Heart left ventricle (tissue), 16 donors: ENCODE measurements at regions of chr3 and their contacts with region 1.

Region 1: DNA sequence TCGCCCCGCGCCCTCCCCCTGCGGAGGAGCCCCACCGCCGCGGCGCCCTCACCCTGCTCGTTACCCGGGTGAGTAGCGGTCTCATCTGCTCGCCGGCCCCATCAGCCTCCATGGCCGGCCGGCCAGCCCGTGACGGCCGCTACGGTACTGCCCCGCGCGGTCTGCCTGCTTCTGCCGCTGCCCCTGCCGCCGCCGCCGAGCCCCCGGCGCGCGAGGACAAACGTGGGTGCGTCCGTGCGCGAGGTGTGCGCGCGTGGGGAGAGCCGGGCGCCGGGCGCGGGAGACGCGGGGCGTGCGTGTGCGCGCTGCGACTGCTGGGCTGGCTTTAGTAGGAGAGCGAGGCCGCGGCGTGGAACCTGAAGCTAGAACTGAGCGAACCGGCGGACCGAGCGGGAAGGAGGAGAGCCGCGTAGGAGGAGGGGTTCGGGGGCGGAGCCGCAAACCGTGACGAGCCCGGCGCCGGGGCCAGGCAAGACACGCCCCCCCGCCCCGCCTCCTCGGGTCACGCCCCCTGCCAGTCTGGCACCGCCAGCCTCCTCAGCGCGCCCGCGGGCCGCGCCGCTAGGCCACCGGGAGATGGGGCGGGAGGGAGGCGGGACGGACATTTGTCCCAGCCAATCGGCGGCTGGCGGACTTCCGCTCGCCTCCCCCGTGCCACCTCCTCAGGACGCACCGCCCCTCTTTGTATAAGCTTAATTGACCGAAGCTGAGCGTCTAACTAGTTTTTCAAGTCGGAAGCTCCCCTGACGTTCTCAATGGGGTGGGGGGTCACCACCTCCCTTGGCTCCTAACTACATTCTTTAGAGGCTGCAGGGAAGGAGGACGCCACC is at the start of gene SLC4A7:
- DNase-seq: peak; percentile 97 to 99 (median 97)
- ATAC-seq: peak; percentile 90 to 98 (median 97)
- H3K4me3 ChIP-seq: peak within 1 kb of the TSS; percentile 60 to 96 (median 83)
- H3K27ac ChIP-seq: peak within 1 kb of the TSS; percentile 84 to 97 (median 92)
- H3K4me1 ChIP-seq: peaks cover 0 to 38% (median 16%) of the 10 kb centered on the region in 12 donors
- H3K27me3 ChIP-seq: no peaks in the 10 kb centered on the region
- CTCF ChIP-seq: peak in 1 of 12 donors; percentile 11
- POLR2A ChIP-seq: peak; percentile 77 to 97
- total RNA-seq, gene SLC4A7: 8.9 to 25.4 (median 16.0) TPM

Region 2: GRCh38 chr3:27521179-27521871 is 37.1 kb after region 1 on chr3:
- intact Hi-C with region 1: loop called in 2 of 10 experiments (anchors 5 kb)
- DNase-seq: peak in 3 of 5 donors; percentile 19 to 49 (median 41)
- ATAC-seq: peak; percentile 69 to 96 (median 88)
- H3K4me3 ChIP-seq: no peak overlapping the region
- H3K27ac ChIP-seq: peak overlapping the region in 11 of 12 donors; percentile 6 to 63 (median 45)
- H3K4me1 ChIP-seq: peaks cover 0 to 35% (median 12%) of the 10 kb centered on the region in 12 donors
- H3K27me3 ChIP-seq: no peaks in the 10 kb centered on the region
- CTCF ChIP-seq: no peak
- POLR2A ChIP-seq: no peak

Region 3: GRCh38 chr3:27544372-27544865 is 60.2 kb after region 1 on chr3:
- intact Hi-C with region 1: no loop called
- DNase-seq: no peak
- ATAC-seq: peak in 2 of 4 donors; percentile 30 to 83
- H3K4me3 ChIP-seq: no peak overlapping the region
- H3K27ac ChIP-seq: peak overlapping the region in 6 of 12 donors; percentile 11 to 55 (median 36)
- H3K4me1 ChIP-seq: peaks cover 0 to 28% (median 0%) of the 10 kb centered on the region in 12 donors
- H3K27me3 ChIP-seq: no peaks in the 10 kb centered on the region
- CTCF ChIP-seq: no peak
- POLR2A ChIP-seq: no peak

Region 4: GRCh38 chr3:27632431-27633223 is 148.4 kb after region 1 on chr3:
- intact Hi-C with region 1: loop called in 3 of 10 experiments (anchors 5 to 10 kb)
- DNase-seq: peak; percentile 43 to 66 (median 50)
- ATAC-seq: peak in 3 of 4 donors; percentile 85 to 89 (median 86)
- H3K4me3 ChIP-seq: peak overlapping the region in 11 of 12 donors; percentile 25 to 76 (median 63)
- H3K27ac ChIP-seq: peak overlapping the region; percentile 3 to 91 (median 76)
- H3K4me1 ChIP-seq: peaks cover 0 to 10% (median 1%) of the 10 kb centered on the region in 12 donors
- H3K27me3 ChIP-seq: no peaks in the 10 kb centered on the region
- CTCF ChIP-seq: no peak
- POLR2A ChIP-seq: no peak

Region 5: DNA sequence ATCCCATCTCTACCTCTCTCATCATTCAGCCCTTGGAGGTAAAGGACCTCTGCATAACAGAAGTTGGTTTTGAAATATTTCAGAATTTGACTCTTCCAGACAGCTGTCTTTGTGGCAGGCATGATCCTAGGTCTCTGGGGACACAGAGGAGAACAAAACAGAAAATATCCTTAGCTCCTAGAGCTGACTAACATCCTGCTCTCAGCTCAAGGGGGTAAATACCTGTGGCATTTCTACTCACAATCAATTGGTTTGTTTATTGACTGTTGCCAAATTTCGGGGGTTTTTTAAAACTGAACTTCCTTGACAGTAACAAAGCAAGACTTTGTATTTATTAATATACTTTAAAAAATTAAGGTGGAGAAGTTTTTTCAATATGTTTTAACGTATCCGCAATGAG is 159.1 kb after region 1 on chr3:
- intact Hi-C with region 1: loop called in 3 of 10 experiments (anchors 10 kb)
- DNase-seq: no peak
- ATAC-seq: no peak
- H3K4me3 ChIP-seq: no peak overlapping the region
- H3K27ac ChIP-seq: no peak overlapping the region
- H3K4me1 ChIP-seq: peaks cover 0 to 13% (median 0%) of the 10 kb centered on the region in 12 donors
- H3K27me3 ChIP-seq: no peaks in the 10 kb centered on the region
- CTCF ChIP-seq: no peak
- POLR2A ChIP-seq: no peak

Region 6: DNA sequence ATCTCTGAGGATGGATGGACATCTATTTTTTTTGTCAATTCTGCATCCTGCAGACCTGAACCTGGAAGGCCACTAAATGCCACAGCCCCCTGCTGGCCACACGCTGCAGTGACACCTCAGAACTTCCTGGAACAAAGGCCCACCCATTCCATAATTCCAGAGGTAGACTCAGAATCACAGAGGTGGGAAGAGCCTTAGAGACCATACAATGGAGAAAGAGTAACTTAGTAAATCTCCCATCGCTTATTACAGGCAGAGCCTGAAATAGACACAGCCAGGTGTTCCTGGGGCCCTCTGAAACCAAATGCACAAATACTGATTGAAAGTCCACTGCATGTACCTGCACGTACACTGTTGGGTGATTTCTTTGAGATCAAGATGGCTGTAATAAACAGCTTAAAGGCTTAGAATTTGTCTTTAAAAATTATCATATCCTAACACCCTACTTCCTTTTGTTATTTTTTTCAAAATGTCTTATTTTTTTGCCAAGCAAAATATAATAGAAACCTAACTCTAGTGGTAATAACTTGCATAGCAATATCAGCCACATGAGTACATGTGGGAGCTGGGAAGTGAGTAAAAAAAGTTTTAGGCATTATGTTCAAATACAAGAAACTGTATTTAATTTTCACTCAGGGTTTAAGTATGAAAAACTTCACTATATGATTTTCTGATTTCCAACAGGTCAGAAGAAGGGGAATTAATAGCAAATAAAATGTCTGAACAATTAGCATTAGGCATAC is 175.2 kb after region 1 on chr3:
- intact Hi-C with region 1: loop called in 3 of 10 experiments (anchors 10 kb)
- DNase-seq: peak; percentile 33 to 71 (median 40)
- ATAC-seq: peak in 3 of 4 donors; percentile 45 to 71 (median 57)
- H3K4me3 ChIP-seq: no peak overlapping the region
- H3K27ac ChIP-seq: no peak overlapping the region
- H3K4me1 ChIP-seq: no peaks in the 10 kb centered on the region
- H3K27me3 ChIP-seq: no peaks in the 10 kb centered on the region
- CTCF ChIP-seq: peak; percentile 71 to 83 (median 77)
- POLR2A ChIP-seq: no peak